ENCODE measurements at regions of chr20 and their contacts with region 1.

Region 1: DNA sequence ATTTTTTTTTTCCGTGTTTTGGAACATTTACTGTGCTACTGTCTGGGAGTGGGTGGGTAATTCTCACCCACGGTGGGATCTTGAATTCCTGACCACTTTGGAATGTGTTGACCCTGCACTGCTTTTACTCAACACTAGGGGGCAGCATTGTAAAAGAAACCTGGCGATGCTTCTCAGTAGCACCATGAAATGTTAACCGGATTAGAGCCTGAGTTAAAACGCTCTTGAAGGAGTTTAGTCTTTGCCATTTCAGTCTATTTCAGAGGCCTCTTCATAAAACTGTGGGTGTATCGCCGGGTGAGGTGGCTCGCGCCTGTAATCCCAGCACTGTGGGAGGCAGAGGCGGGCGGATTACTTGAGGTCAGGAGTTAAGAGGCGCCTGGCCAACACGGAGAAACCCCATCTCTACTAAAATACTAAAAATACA is 114.4 kb upstream of the PRND start:
- DNase-seq: peak in 4 of 5 donors; percentile 25 to 69 (median 46)
- H3K4me3 ChIP-seq: no peak overlapping the region
- H3K27ac ChIP-seq: no peak overlapping the region
- H3K4me1 ChIP-seq: no peaks in the 10 kb centered on the region
- H3K27me3 ChIP-seq: no peaks in the 10 kb centered on the region
- CTCF ChIP-seq: peak; percentile 68 to 94 (median 87)
- EP300 ChIP-seq: no peak
- POLR2A ChIP-seq: no peak

Region 2: DNA sequence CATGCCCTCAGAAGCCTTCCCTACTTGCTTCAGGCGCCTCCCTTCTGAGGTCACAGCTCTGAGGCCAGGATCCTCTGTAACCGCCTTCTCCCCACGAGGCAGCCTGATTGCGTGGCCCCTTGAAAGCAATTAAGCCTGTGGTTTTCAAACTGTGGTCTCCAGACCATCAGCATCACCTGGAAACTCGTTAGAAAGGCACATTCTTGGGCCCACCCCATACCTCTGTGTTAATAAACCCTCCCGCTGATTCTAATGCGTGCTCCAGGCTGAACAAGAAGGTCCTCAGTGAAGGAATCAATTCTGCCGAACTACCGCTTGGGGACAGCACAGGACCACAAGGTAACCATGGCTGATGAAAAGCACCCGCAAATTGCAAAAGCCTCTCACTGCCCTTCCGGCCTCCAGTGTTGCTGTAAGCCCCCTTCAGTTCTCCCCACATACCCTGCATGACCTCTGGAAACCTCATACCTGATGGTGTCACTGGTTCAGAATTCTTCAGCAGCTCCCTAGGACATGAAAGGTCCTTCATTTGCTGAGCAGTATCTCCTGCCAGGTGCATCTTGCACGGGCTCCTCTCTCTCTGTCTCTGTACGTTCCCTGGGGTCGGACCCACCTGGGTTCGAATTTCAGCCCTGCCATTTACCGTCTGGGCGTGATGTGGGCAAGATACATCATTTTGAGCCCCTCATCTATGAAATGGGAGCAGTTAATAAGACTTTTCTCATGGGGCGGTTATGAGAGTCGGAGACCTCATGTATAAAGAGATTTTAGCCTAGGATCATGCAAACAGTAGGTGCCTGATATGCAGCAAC is 498.6 kb before region 1 on chr20:
- intact Hi-C with region 1: loop called in 1 of 4 experiments (anchors 10 kb)
- DNase-seq: peak; percentile 58 to 76 (median 71)
- H3K4me3 ChIP-seq: no peak overlapping the region
- H3K27ac ChIP-seq: no peak overlapping the region
- H3K4me1 ChIP-seq: peaks cover 3% of the 10 kb centered on the region
- H3K27me3 ChIP-seq: no peaks in the 10 kb centered on the region
- CTCF ChIP-seq: peak; percentile 86 to 90 (median 90)
- EP300 ChIP-seq: no peak
- POLR2A ChIP-seq: no peak

Region 3: GRCh38 chr20:4720041-4720976 is 113.0 kb after region 1 on chr20:
- intact Hi-C with region 1: loop called (anchors 1 to 5 kb)
- DNase-seq: peak; percentile 74 to 84 (median 80)
- H3K4me3 ChIP-seq: no peak overlapping the region
- H3K27ac ChIP-seq: peak overlapping the region; percentile 50 to 72
- H3K4me1 ChIP-seq: peaks cover 2% of the 10 kb centered on the region
- H3K27me3 ChIP-seq: no peaks in the 10 kb centered on the region
- CTCF ChIP-seq: peak; percentile 74 to 77 (median 75)
- EP300 ChIP-seq: no peak
- POLR2A ChIP-seq: no peak

Region 4: GRCh38 chr20:4949833-4950178 is 342.5 kb after region 1 on chr20:
- intact Hi-C with region 1: no loop called
- DNase-seq: no peak
- H3K4me3 ChIP-seq: no peak overlapping the region
- H3K27ac ChIP-seq: no peak overlapping the region
- H3K4me1 ChIP-seq: peaks cover 14% of the 10 kb centered on the region
- H3K27me3 ChIP-seq: no peaks in the 10 kb centered on the region
- CTCF ChIP-seq: peak; percentile 21 to 54 (median 50)
- EP300 ChIP-seq: no peak
- POLR2A ChIP-seq: no peak